Adrenal gland (tissue), 19 donors: ENCODE measurements at regions of chr12 and their contacts with region 1.

Region 1: DNA sequence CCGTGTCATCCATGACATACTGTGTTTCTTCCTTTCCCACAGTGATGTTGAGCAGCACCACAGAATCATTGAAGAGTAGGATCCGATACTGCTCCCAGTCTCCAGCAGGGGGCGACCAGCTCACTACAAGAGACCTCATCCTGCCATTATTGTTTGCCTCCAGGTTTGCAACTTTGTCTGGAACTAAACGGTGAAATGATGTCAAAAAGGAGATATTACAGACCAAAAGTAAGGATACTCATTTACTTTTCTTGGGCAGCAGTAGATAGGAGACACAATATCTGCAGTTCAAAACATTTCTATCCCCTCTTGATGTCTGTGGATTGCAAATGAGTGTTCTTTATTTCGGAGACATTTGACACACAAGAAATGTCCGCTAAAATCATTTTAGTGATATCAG is 47.2 kb downstream of the PTPRB start:
- DNase-seq: peak; percentile 68 to 93 (median 84)
- H3K4me3 ChIP-seq: no peak overlapping the region
- H3K27ac ChIP-seq: no peak overlapping the region
- H3K4me1 ChIP-seq: no peaks in the 10 kb centered on the region
- H3K27me3 ChIP-seq: no peaks in the 10 kb centered on the region
- CTCF ChIP-seq: peak; percentile 81 to 88 (median 86)
- POLR2A ChIP-seq: no peak

Region 2: DNA sequence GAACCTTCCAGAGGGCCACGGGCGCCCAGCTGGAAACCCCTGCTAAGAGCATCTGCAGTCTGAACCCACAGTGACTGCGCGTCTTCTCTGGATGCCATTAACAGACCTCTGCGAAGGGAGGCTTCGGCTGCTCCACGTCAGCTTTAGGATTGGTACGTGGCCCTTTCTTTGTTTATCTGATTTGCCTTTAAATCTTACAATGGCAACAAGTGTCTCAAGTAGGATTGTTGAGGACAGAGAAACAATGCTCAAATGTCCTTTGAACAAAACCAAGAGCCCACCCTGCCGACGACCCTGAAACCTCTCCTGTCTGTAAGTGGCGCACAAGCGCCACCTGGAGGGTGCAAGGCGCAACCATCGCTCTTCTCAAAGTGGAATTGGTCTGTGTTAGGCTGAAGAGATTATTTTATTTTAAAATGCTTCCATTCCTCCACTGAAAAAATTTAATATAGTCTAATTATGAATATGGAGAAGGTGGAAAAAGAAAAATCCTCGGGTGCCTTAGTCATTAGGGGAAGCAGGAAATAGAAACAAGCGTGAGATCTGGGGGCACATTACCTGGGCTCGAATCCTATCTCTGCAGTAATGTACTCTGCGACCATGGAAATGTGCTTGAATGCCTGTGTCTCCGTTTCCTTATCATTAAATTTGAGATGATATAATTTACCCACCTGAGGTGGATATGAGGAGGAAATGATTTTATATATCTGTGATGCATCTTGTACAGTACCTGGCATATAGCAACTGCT is 129.8 kb after region 1 on chr12:
- intact Hi-C with region 1: loop called (anchors 5 to 10 kb)
- DNase-seq: peak; percentile 20 to 64 (median 33)
- H3K4me3 ChIP-seq: no peak overlapping the region
- H3K27ac ChIP-seq: peak overlapping the region in 2 of 5 donors; percentile 23 to 53
- H3K4me1 ChIP-seq: no peaks in the 10 kb centered on the region
- H3K27me3 ChIP-seq: no peaks in the 10 kb centered on the region
- CTCF ChIP-seq: peak; percentile 61 to 87 (median 78)
- POLR2A ChIP-seq: no peak